Right ventricle myocardium inferior (tissue), 1 donor: ENCODE measurements at regions of chr17 and their contacts with region 1.

Region 1: DNA sequence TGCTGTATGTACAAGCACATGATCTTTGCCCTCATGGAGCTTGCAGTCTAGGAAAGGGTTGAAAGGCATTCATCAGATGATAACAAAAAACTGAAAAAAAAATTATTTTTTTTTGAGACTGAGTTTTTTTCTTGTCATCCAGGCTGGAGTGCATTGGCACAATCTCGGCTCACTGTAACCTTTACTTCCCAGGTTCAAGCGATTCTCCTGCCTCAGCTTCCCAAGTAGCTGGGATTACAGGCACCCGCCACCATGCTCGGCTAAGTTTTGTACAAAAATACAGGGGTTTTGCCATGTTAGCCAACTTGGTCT is 38.7 kb upstream of the BCAS3 start:
- DNase-seq: no peak
- ATAC-seq: no peak

Region 2: GRCh38 chr17:60577147-60577915 is 61.6 kb before region 1 on chr17:
- intact Hi-C with region 1: loop called (anchors 2 kb)
- DNase-seq: no peak
- ATAC-seq: peak; percentile 90

Region 3: GRCh38 chr17:60750640-60751039 is 111.7 kb after region 1 on chr17:
- intact Hi-C with region 1: no loop called
- DNase-seq: no peak
- ATAC-seq: no peak